HCT116 (cell line): ENCODE measurements at regions of chr3 and their contacts with region 1.

Region 1: GRCh38 chr3:48952510-48953118 is 34.0 kb downstream of the ARIH2 start:
- DNase-seq: peak; percentile 41
- ATAC-seq: peak; percentile 93
- H3K4me3 ChIP-seq: no peak overlapping the region
- H3K27ac ChIP-seq: no peak overlapping the region
- H3K4me1 ChIP-seq: 0 out of 4 replicates have a peak, but pooled peaks cover 0 to 4% of the 10 kb centered on the region in 2 experiments
- H3K27me3 ChIP-seq: no peaks in the 10 kb centered on the region
- CTCF ChIP-seq: peak; percentile 61 to 76 (median 74); a peak in 5 of 6 replicates
- POLR2A ChIP-seq: no peak
- RAD21 ChIP-seq: peak; percentile 80

Region 2: GRCh38 chr3:48685602-48686511 is 266.8 kb before region 1 on chr3 and contains the start of gene NCKIPSD:
- CTCF ChIA-PET with region 1: interaction called, 4 read pairs
- POLR2A ChIA-PET with region 1: no interaction called
- RAD21 ChIA-PET with region 1: no interaction called
- intact Hi-C with region 1: loop called (anchors 5 kb)
- DNase-seq: peak; percentile 60
- ATAC-seq: peak; percentile 88
- H3K4me3 ChIP-seq: peak within 1 kb of the TSS; percentile 77 to 96
- H3K27ac ChIP-seq: peak within 1 kb of the TSS; percentile 91
- H3K4me1 ChIP-seq: peaks cover 13 to 21% of the 10 kb centered on the region in 2 experiments
- H3K27me3 ChIP-seq: no peaks in the 10 kb centered on the region
- CTCF ChIP-seq: peak; percentile 58 to 81 (median 63); a peak in 5 of 6 replicates
- POLR2A ChIP-seq: peak; percentile 90
- RAD21 ChIP-seq: peak; percentile 61
- total RNA-seq, gene NCKIPSD: 36.9 TPM